ENCODE measurements at regions of chr2 and their contacts with region 1.

Region 1: GRCh38 chr2:174603280-174603679 is 5.7 kb upstream of the WIPF1 start:
- DNase-seq: peak in 12 of 14 experiments; percentile 19 to 85 (median 50)
- ATAC-seq: peak; percentile 66
- H3K4me3 ChIP-seq: no peak overlapping the region
- H3K4me3 Mint-ChIP-seq: peak overlapping the region; percentile 28
- H3K27ac ChIP-seq: no peak overlapping the region
- H3K27ac Mint-ChIP-seq: peak overlapping the region; percentile 95
- H3K4me1 ChIP-seq: peaks cover 69% of the 10 kb centered on the region
- H3K4me1 Mint-ChIP-seq: peaks cover 85% of the 10 kb centered on the region
- H3K27me3 ChIP-seq: no peaks in the 10 kb centered on the region
- H3K27me3 Mint-ChIP-seq: no peaks in the 10 kb centered on the region
- CTCF ChIP-seq: peak; percentile 84

Region 2: DNA sequence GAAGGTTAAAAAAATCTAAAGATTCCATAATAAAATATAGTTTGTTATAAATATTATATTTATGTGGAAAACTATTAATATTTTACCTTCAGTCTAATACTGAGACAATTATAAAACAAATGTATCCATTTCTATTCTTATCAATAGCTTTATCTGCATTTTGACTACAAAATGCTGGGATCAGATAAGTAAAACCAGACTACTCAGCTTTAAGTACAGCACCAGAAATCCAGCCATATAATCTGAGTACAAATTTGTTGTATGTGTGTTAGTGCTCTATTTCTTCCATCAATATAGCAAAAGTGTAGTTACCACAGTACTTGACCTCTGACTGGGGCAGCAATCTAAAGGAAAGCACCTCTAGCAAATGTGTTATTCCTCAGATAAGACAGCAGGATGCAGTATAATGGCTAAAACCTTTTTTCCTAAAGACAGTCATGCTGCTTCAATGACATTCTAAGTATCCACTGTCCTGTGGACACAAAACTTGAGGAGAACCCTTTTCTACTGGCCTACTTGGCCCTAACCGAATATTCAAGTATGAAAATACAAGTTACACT is 423.0 kb before region 1 on chr2:
- CTCF ChIA-PET with region 1: no interaction called
- POLR2A ChIA-PET with region 1: no interaction called
- intact Hi-C with region 1: no loop called
- DNase-seq: no peak
- ATAC-seq: no peak
- H3K4me3 ChIP-seq: no peak overlapping the region
- H3K4me3 Mint-ChIP-seq: no peak overlapping the region
- H3K27ac ChIP-seq: no peak overlapping the region
- H3K27ac Mint-ChIP-seq: no peak overlapping the region
- H3K4me1 ChIP-seq: no peaks in the 10 kb centered on the region
- H3K4me1 Mint-ChIP-seq: peaks cover 15% of the 10 kb centered on the region
- H3K27me3 ChIP-seq: no peaks in the 10 kb centered on the region
- H3K27me3 Mint-ChIP-seq: no peaks in the 10 kb centered on the region
- CTCF ChIP-seq: no peak

Region 3: DNA sequence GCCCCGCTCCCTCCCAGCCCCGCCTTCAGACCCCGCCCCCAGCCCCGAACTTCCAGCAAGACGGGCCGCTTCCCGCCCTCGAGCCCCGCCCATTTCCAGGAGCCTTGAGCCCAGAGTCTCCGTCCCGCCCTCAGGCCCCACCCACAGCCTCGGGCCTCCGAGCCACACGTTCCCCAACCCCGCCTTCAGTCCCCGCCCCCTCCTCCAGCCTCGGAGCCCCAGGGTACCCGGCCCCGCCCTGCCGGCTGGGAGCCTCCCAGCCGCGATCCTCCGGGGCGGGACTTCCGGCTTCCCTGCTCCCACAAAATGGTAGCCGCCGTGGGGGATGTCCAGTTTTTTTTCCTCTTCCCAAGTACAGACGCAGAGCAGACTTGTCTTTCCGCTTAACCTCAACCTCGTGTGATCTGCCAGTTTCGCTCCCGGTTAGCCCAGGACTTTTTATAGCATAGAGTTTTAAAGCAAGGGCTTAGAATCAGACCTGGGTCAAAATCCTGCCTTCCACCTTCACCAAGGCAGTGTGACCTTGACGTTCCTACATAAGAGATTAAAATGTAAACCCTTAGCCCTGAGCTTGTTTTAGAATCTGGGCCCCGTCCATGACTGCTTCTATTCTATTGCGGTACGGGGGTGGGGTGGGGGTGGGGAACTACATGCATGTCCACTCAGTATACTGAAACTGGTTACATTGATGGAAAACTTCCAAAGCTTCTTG is 116.0 kb before region 1 on chr2:
- CTCF ChIA-PET with region 1: interaction called, 3 read pairs
- POLR2A ChIA-PET with region 1: interaction called, 80 read pairs
- intact Hi-C with region 1: loop called in 1 of 2 experiments (anchors 5 kb)
- DNase-seq: peak; percentile 80 to 100 (median 98)
- ATAC-seq: peak; percentile 78
- H3K4me3 ChIP-seq: peak overlapping the region; percentile 83
- H3K4me3 Mint-ChIP-seq: peak overlapping the region; percentile 94
- H3K27ac ChIP-seq: peak overlapping the region; percentile 49 to 75
- H3K27ac Mint-ChIP-seq: peak overlapping the region; percentile 95
- H3K4me1 ChIP-seq: peaks cover 33% of the 10 kb centered on the region
- H3K4me1 Mint-ChIP-seq: peaks cover 82% of the 10 kb centered on the region
- H3K27me3 ChIP-seq: no peaks in the 10 kb centered on the region
- H3K27me3 Mint-ChIP-seq: no peaks in the 10 kb centered on the region
- CTCF ChIP-seq: no peak

Region 4: GRCh38 chr2:174673876-174674275 is 70.6 kb after region 1 on chr2:
- CTCF ChIA-PET with region 1: no interaction called
- POLR2A ChIA-PET with region 1: no interaction called
- intact Hi-C with region 1: no loop called
- DNase-seq: no peak
- ATAC-seq: no peak
- H3K4me3 ChIP-seq: no peak overlapping the region
- H3K4me3 Mint-ChIP-seq: no peak overlapping the region
- H3K27ac ChIP-seq: no peak overlapping the region
- H3K27ac Mint-ChIP-seq: no peak overlapping the region
- H3K4me1 ChIP-seq: peaks cover 14% of the 10 kb centered on the region
- H3K4me1 Mint-ChIP-seq: peaks cover 38% of the 10 kb centered on the region
- H3K27me3 ChIP-seq: no peaks in the 10 kb centered on the region
- H3K27me3 Mint-ChIP-seq: no peaks in the 10 kb centered on the region
- CTCF ChIP-seq: no peak

Region 5: DNA sequence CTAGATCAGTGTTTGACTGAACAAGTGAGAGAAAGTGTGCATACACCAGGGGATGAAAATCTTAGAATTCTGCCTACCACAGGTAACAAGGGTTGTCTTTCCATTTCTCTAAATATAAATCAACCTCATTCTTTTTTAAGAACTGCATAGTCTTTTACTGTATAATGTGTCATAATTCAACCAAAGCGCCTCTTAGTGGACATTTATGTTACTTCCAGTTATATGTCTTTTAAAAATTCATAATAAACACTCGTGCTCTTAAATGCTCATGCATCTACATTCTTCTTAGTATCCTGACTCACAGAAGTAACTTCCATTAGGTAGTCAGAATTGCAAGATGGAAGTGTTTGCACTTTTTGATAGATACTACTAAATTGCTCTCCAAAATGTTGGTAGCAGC is 84.8 kb after region 1 on chr2:
- CTCF ChIA-PET with region 1: interaction called, 40 read pairs
- POLR2A ChIA-PET with region 1: interaction called, 20 read pairs
- intact Hi-C with region 1: loop called (anchors 1 to 2 kb)
- DNase-seq: peak in 3 of 14 experiments; percentile 59 to 70 (median 69)
- ATAC-seq: peak; percentile 73
- H3K4me3 ChIP-seq: no peak overlapping the region
- H3K4me3 Mint-ChIP-seq: peak overlapping the region; percentile 0
- H3K27ac ChIP-seq: no peak overlapping the region
- H3K27ac Mint-ChIP-seq: peak overlapping the region; percentile 11
- H3K4me1 ChIP-seq: peaks cover 11% of the 10 kb centered on the region
- H3K4me1 Mint-ChIP-seq: peaks cover 14% of the 10 kb centered on the region
- H3K27me3 ChIP-seq: no peaks in the 10 kb centered on the region
- H3K27me3 Mint-ChIP-seq: no peaks in the 10 kb centered on the region
- CTCF ChIP-seq: peak; percentile 63

Region 6: DNA sequence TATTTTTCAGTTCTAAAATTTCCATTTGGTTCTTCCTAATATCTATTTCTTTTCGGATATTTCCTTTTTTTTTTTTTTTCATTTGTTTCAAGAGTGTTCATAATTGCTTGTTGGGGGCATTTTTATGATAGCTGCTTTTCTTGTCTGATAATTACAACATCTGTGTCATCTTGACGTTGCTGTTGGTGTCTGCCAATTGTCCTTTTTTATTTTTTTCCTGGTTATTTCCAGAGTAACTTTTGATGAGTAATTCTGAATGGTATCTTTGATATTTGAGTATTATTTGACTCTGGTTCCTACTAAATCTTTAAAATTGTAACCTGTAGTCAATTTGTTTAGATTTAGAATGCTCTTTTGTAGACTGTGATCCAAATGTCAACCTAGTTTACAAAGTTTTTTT is 212.2 kb after region 1 on chr2:
- CTCF ChIA-PET with region 1: no interaction called
- POLR2A ChIA-PET with region 1: no interaction called
- intact Hi-C with region 1: no loop called
- DNase-seq: no peak
- ATAC-seq: no peak
- H3K4me3 ChIP-seq: no peak overlapping the region
- H3K4me3 Mint-ChIP-seq: no peak overlapping the region
- H3K27ac ChIP-seq: no peak overlapping the region
- H3K27ac Mint-ChIP-seq: no peak overlapping the region
- H3K4me1 ChIP-seq: no peaks in the 10 kb centered on the region
- H3K4me1 Mint-ChIP-seq: no peaks in the 10 kb centered on the region
- H3K27me3 ChIP-seq: no peaks in the 10 kb centered on the region
- H3K27me3 Mint-ChIP-seq: peaks cover 4% of the 10 kb centered on the region
- CTCF ChIP-seq: no peak

Measured in CD4-positive, alpha-beta T cell (primary cell).